Mammary epithelial cell (primary cell): ENCODE measurements at regions of chr6 and their contacts with region 1.

Region 1: GRCh38 chr6:159008656-159009288 is 8.8 kb upstream of the RSPH3 start:
- DNase-seq: peak; percentile 45
- H3K4me3 ChIP-seq: no peak overlapping the region
- H3K27ac ChIP-seq: no peak overlapping the region
- H3K4me1 ChIP-seq: no peaks in the 10 kb centered on the region
- H3K27me3 ChIP-seq: no peaks in the 10 kb centered on the region
- CTCF ChIP-seq: peak; percentile 50 to 55

Region 2: GRCh38 chr6:159042003-159042825 is 33.4 kb after region 1 on chr6:
- CTCF ChIA-PET with region 1: no interaction called
- dilution Hi-C with region 1: loop called (anchors 5 kb)
- in situ Hi-C with region 1: no loop called
- intact Hi-C with region 1: loop called (anchors 1 kb)
- DNase-seq: peak; percentile 84
- H3K4me3 ChIP-seq: no peak overlapping the region
- H3K27ac ChIP-seq: peak overlapping the region; percentile 74
- H3K4me1 ChIP-seq: peaks cover 27% of the 10 kb centered on the region
- H3K27me3 ChIP-seq: no peaks in the 10 kb centered on the region
- CTCF ChIP-seq: peak; percentile 94 to 99

Region 3: GRCh38 chr6:159151266-159151855 is 142.6 kb after region 1 on chr6:
- CTCF ChIA-PET with region 1: no interaction called
- dilution Hi-C with region 1: no loop called
- in situ Hi-C with region 1: no loop called
- intact Hi-C with region 1: loop called (anchors 1 kb)
- DNase-seq: peak; percentile 19
- H3K4me3 ChIP-seq: no peak overlapping the region
- H3K27ac ChIP-seq: no peak overlapping the region
- H3K4me1 ChIP-seq: no peaks in the 10 kb centered on the region
- H3K27me3 ChIP-seq: no peaks in the 10 kb centered on the region
- CTCF ChIP-seq: peak; percentile 82 to 86